PC-9 (cell line): ENCODE measurements at regions of chr18 and their contacts with region 1.

Region 1: DNA sequence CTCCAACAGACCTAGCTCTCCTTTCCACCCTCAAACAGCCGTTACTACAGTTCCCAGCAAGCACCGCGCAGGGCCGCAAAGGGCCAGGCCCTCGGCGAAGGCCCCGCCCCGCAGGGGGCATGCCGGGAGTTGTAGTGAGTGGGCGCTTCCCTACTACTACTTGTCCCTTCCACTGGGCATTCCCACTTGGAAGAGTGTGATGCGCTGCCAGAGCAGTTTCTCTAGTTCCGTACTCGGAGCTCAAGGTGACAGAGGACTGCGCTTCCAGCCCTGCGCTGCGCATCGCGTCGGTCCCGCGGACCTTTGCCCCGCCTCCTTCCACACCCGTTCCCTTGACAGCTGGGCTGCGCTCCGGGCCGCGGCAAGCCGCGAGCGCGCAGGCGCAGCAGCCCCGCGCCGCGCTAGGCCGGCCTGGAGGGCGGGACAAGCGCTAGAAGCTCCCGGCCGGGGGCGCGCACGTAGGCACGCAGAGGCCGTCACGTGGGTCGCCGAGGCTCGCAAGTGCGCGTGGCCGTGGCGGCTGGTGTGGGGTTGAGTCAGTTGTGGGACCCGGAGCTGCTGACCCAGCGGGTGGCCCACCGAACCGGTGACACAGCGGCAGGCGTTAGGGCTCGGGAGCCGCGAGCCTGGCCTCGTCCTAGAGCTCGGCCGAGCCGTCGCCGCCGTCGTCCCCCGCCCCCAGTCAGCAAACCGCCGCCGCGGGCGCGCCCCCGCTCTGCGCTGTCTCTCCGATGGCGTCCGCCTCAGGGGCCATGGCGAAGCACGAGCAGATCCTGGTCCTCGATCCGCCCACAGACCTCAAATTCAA is at the start of gene VAPA:
- DNase-seq: peak; percentile 78 to 97
- H3K4me3 ChIP-seq: peak within 1 kb of the TSS; percentile 99
- H3K27ac ChIP-seq: peak within 1 kb of the TSS; percentile 90
- H3K4me1 ChIP-seq: peaks cover 39% of the 10 kb centered on the region
- H3K27me3 ChIP-seq: no peaks in the 10 kb centered on the region
- CTCF ChIP-seq: no peak
- total RNA-seq, gene VAPA: 340 and 359 TPM in 2 replicates

Region 2: GRCh38 chr18:9614401-9615279 is 299.1 kb before region 1 on chr18 and contains the start of gene PPP4R1:
- CTCF ChIA-PET with region 1: no interaction called
- POLR2A ChIA-PET with region 1: interaction called, 3 read pairs
- intact Hi-C with region 1: loop called (anchors 10 kb)
- DNase-seq: peak; percentile 56 to 80
- H3K4me3 ChIP-seq: peak within 1 kb of the TSS; percentile 94
- H3K27ac ChIP-seq: peak within 1 kb of the TSS; percentile 97
- H3K4me1 ChIP-seq: peaks cover 71% of the 10 kb centered on the region
- H3K27me3 ChIP-seq: no peaks in the 10 kb centered on the region
- CTCF ChIP-seq: no peak
- total RNA-seq, gene PPP4R1: 157 and 167 TPM in 2 replicates

Region 3: DNA sequence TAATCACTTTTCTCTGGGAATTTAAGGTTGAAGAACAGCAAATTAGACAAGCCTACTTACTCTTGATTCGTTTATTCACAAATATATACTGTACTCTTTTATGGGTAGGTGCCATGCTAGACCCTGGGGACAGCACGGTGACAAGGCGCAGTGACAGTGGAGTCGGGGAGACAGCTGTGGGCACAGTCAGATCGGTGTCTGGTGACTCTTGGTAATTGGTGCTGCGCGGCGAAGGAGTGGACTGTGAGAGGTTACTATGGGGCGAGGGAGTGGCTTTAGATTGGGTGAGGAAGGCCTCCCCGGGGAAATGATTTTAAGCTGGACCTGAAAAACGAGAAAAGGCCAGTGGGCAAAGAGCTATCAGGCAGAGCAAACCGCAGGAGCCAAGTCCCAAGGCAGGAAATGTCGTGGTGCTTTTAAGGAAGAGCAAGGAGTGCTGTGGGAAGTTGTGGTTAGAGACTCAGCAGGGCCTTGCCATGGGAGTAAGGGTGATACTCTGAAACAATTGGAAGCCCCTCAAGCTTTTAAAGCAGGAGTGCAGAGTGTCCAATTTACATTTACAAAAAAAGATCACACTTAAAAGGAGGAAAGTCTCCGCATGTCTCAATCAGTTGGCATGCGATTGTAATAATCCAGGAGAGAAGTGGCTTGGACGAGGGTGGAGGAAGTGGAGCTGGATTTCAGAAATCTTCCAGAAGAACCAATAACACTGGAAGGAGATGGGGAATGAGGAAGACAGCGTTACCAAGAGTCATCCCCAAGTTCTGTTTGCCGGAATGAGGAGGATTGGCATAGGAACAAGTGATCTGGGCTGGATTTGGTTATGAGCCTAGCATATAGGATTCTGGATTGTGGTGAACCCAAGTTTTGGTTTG is 64.1 kb before region 1 on chr18:
- CTCF ChIA-PET with region 1: no interaction called
- POLR2A ChIA-PET with region 1: interaction called, 4 read pairs
- intact Hi-C with region 1: loop called (anchors 2 kb)
- DNase-seq: peak; percentile 92 to 98
- H3K4me3 ChIP-seq: peak overlapping the region; percentile 44; the same call in 1 of the 2 replicates
- H3K27ac ChIP-seq: peak overlapping the region; percentile 96
- H3K4me1 ChIP-seq: peaks cover 51% of the 10 kb centered on the region
- H3K27me3 ChIP-seq: no peaks in the 10 kb centered on the region
- CTCF ChIP-seq: no peak

Region 4: GRCh38 chr18:9876867-9877654 is 36.7 kb before region 1 on chr18:
- CTCF ChIA-PET with region 1: no interaction called
- POLR2A ChIA-PET with region 1: no interaction called
- intact Hi-C with region 1: loop called (anchors 1 kb)
- DNase-seq: peak; percentile 57 to 96
- H3K4me3 ChIP-seq: peak overlapping the region; percentile 52
- H3K27ac ChIP-seq: peak overlapping the region; percentile 97
- H3K4me1 ChIP-seq: peaks cover 34% of the 10 kb centered on the region
- H3K27me3 ChIP-seq: no peaks in the 10 kb centered on the region
- CTCF ChIP-seq: no peak

Region 5: GRCh38 chr18:9890196-9890595 is 23.5 kb before region 1 on chr18:
- CTCF ChIA-PET with region 1: no interaction called
- POLR2A ChIA-PET with region 1: no interaction called
- intact Hi-C with region 1: no loop called
- DNase-seq: no peak
- H3K4me3 ChIP-seq: no peak overlapping the region
- H3K27ac ChIP-seq: no peak overlapping the region
- H3K4me1 ChIP-seq: no peaks in the 10 kb centered on the region
- H3K27me3 ChIP-seq: no peaks in the 10 kb centered on the region
- CTCF ChIP-seq: no peak

Region 6: GRCh38 chr18:10437837-10438236 is 524.1 kb after region 1 on chr18:
- CTCF ChIA-PET with region 1: no interaction called
- POLR2A ChIA-PET with region 1: no interaction called
- intact Hi-C with region 1: no loop called
- DNase-seq: no peak
- H3K4me3 ChIP-seq: no peak overlapping the region
- H3K27ac ChIP-seq: no peak overlapping the region
- H3K4me1 ChIP-seq: no peaks in the 10 kb centered on the region
- H3K27me3 ChIP-seq: no peaks in the 10 kb centered on the region
- CTCF ChIP-seq: peak; percentile 67

Region 7: GRCh38 chr18:11857177-11857887 is 1943.6 kb after region 1 on chr18:
- CTCF ChIA-PET with region 1: no interaction called
- POLR2A ChIA-PET with region 1: no interaction called
- intact Hi-C with region 1: loop called (anchors 5 kb)
- DNase-seq: peak; percentile 87 to 97
- H3K4me3 ChIP-seq: peak overlapping the region; percentile 43; the same call in 1 of the 2 replicates
- H3K27ac ChIP-seq: peak overlapping the region; percentile 97
- H3K4me1 ChIP-seq: peaks cover 62% of the 10 kb centered on the region
- H3K27me3 ChIP-seq: no peaks in the 10 kb centered on the region
- CTCF ChIP-seq: no peak